GM12878 (cell line): ENCODE measurements at regions of chr16 and their contacts with region 1.

Region 1: GRCh38 chr16:68085259-68086071 is at the start of gene NFATC3:
- DNase-seq: no peak
- ATAC-seq: peak; percentile 80
- H3K4me3 ChIP-seq: peak within 1 kb of the TSS; percentile 89
- H3K27ac ChIP-seq: peak within 1 kb of the TSS; percentile 86
- H3K4me1 ChIP-seq: peaks cover 18% of the 10 kb centered on the region
- H3K27me3 ChIP-seq: no peaks in the 10 kb centered on the region
- CTCF ChIP-seq: no peak
- EP300 ChIP-seq: no peak
- POLR2A ChIP-seq: peak; percentile 80
- RAD21 ChIP-seq: no peak
- polyA plus RNA-seq, gene NFATC3: 4.2 to 5.5 TPM

Region 2: DNA sequence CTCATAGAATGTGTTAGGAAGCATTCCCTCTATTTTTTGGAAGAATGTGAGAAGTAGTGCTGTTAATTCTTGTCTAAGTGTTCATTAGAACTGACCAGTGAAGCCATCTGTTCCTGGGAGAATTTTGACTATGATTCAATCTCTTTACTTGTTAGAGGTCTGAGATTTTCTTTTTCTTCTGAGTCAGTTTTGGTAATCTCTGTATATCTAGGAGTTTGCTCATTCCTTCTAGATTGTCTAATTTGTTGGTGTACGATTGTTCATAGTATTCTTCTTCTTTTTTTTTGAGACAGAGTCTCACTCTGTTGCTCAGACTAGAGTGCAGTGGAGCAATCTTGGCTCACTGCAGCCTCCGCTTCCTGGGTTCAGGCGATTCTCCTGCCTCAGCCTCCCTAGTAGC is 20.1 kb after region 1 on chr16:
- CTCF ChIA-PET with region 1: no interaction called
- POLR2A ChIA-PET with region 1: no interaction called
- RAD21 ChIA-PET with region 1: no interaction called
- SMC1A ChIA-PET with region 1: no interaction called
- in situ Hi-C with region 1: no loop called
- intact Hi-C with region 1: no loop called
- DNase-seq: no peak
- ATAC-seq: no peak
- H3K4me3 ChIP-seq: no peak overlapping the region
- H3K27ac ChIP-seq: no peak overlapping the region
- H3K4me1 ChIP-seq: no peaks in the 10 kb centered on the region
- H3K27me3 ChIP-seq: no peaks in the 10 kb centered on the region
- CTCF ChIP-seq: no peak
- EP300 ChIP-seq: no peak
- POLR2A ChIP-seq: no peak
- RAD21 ChIP-seq: no peak

Region 3: GRCh38 chr16:68128577-68129305 is 43.3 kb after region 1 on chr16:
- CTCF ChIA-PET with region 1: no interaction called
- POLR2A ChIA-PET with region 1: no interaction called
- RAD21 ChIA-PET with region 1: no interaction called
- SMC1A ChIA-PET with region 1: no interaction called
- in situ Hi-C with region 1: no loop called
- intact Hi-C with region 1: loop called (anchors 5 kb)
- DNase-seq: no peak
- ATAC-seq: no peak
- H3K4me3 ChIP-seq: no peak overlapping the region
- H3K27ac ChIP-seq: no peak overlapping the region
- H3K4me1 ChIP-seq: peaks cover 11% of the 10 kb centered on the region
- H3K27me3 ChIP-seq: no peaks in the 10 kb centered on the region
- CTCF ChIP-seq: no peak
- EP300 ChIP-seq: no peak
- POLR2A ChIP-seq: no peak
- RAD21 ChIP-seq: no peak